Ascending aorta (tissue), 2 donors: ENCODE measurements at regions of chr12 and their contacts with region 1.

Region 1: GRCh38 chr12:109804820-109805761 is 28.1 kb downstream of the TRPV4 start:
- DNase-seq: peak in 1 of 2 donors; percentile 85
- H3K4me3 ChIP-seq: no peak overlapping the region
- H3K27ac ChIP-seq: no peak overlapping the region
- H3K4me1 ChIP-seq: no peaks in the 10 kb centered on the region
- H3K27me3 ChIP-seq: no peaks in the 10 kb centered on the region
- CTCF ChIP-seq: peak; percentile 85 to 97 (median 97)

Region 2: GRCh38 chr12:109458771-109459208 is 346.3 kb before region 1 on chr12:
- intact Hi-C with region 1: no loop called
- DNase-seq: no peak
- H3K4me3 ChIP-seq: peak overlapping the region in 1 of 2 donors; percentile 29
- H3K27ac ChIP-seq: peak overlapping the region; percentile 96 to 99
- H3K4me1 ChIP-seq: peaks cover 39 to 65% of the 10 kb centered on the region in 2 donors
- H3K27me3 ChIP-seq: no peaks in the 10 kb centered on the region
- CTCF ChIP-seq: no peak

Region 3: GRCh38 chr12:109844983-109845823 is 40.1 kb after region 1 on chr12:
- intact Hi-C with region 1: loop called (anchors 1 kb)
- DNase-seq: peak; percentile 27 to 91
- H3K4me3 ChIP-seq: peak overlapping the region; percentile 25 to 34
- H3K27ac ChIP-seq: no peak overlapping the region
- H3K4me1 ChIP-seq: peaks cover 0 to 3% of the 10 kb centered on the region in 2 donors
- H3K27me3 ChIP-seq: no peaks in the 10 kb centered on the region
- CTCF ChIP-seq: peak; percentile 97 to 99 (median 98)